Pancreas (tissue), 10 donors: ENCODE measurements at regions of chr17 and their contacts with region 1.

Region 1: GRCh38 chr17:62692721-62693483 is 65.4 kb downstream of the MRC2 start:
- DNase-seq: no peak
- ATAC-seq: peak in 2 of 4 donors; percentile 33 to 45
- H3K4me3 ChIP-seq: no peak overlapping the region
- H3K27ac ChIP-seq: no peak overlapping the region
- H3K4me1 ChIP-seq: no peaks in the 10 kb centered on the region
- H3K27me3 ChIP-seq: no peaks in the 10 kb centered on the region
- CTCF ChIP-seq: no peak

Region 2: DNA sequence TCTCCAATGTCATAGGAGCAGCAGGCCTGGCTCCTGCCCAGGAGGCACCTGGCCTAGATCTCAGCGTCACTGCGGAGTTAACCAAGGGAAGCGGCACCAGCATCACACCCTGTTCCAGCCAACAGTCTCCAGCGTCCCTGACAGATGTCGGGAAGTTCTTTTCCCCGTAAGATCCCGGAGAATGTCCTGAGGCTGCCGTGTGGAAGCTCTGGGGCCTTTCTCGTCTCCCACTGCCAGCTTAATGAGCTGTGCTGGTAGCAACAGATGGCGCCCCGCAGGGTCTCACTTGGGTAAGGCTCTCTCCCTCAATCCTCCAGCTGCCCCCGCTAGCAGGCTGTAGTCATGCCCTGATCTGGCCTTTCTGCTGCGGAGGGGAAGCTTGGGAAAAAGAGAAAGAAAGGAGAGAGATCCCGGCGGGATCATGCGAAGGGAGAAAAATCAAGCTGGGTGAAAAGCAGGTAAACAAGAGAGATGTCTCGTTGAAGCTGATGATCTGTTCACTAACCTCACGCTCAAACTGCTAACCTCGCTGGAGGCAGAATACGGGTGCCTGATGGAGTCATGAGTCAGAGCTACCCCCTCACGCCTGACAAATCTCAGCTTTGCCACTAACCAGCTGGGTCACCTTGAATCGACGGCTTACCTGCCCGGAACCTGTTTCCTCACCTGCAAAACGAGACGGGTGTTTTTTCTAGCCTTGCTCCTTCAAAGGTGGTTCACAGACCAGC is 57.9 kb after region 1 on chr17:
- intact Hi-C with region 1: loop called in 1 of 3 experiments (anchors 10 kb)
- DNase-seq: peak in 3 of 6 donors; percentile 5 to 38 (median 19)
- ATAC-seq: peak in 3 of 4 donors; percentile 36 to 77 (median 75)
- H3K4me3 ChIP-seq: no peak overlapping the region
- H3K27ac ChIP-seq: no peak overlapping the region
- H3K4me1 ChIP-seq: no peaks in the 10 kb centered on the region
- H3K27me3 ChIP-seq: no peaks in the 10 kb centered on the region
- CTCF ChIP-seq: no peak

Region 3: DNA sequence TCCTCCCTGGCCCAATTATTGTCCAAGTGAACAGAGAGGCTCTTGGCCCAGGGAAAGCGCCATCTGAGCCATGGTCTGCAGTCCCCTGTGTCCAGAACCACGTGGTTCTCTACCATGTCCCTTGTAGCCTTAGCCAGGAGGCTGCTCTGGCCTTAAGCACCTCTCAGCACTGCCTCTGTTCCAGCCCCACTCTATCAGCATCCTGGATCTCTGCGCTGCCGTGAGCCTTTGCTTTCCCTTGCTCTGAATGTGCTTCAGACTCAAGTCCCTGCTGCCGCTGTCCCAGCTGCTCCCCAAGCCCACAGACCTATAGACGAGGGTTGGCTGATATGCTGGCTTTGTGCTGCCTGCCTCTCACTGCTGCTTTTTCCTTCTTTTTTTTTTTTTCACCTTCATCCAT is 719.3 kb after region 1 on chr17:
- intact Hi-C with region 1: loop called in 1 of 3 experiments (anchors 5 kb)
- DNase-seq: no peak
- ATAC-seq: no peak
- H3K4me3 ChIP-seq: no peak overlapping the region
- H3K27ac ChIP-seq: no peak overlapping the region
- H3K4me1 ChIP-seq: no peaks in the 10 kb centered on the region
- H3K27me3 ChIP-seq: no peaks in the 10 kb centered on the region
- CTCF ChIP-seq: no peak